ENCODE measurements at regions of chr6 and their contacts with region 1.

Region 1: DNA sequence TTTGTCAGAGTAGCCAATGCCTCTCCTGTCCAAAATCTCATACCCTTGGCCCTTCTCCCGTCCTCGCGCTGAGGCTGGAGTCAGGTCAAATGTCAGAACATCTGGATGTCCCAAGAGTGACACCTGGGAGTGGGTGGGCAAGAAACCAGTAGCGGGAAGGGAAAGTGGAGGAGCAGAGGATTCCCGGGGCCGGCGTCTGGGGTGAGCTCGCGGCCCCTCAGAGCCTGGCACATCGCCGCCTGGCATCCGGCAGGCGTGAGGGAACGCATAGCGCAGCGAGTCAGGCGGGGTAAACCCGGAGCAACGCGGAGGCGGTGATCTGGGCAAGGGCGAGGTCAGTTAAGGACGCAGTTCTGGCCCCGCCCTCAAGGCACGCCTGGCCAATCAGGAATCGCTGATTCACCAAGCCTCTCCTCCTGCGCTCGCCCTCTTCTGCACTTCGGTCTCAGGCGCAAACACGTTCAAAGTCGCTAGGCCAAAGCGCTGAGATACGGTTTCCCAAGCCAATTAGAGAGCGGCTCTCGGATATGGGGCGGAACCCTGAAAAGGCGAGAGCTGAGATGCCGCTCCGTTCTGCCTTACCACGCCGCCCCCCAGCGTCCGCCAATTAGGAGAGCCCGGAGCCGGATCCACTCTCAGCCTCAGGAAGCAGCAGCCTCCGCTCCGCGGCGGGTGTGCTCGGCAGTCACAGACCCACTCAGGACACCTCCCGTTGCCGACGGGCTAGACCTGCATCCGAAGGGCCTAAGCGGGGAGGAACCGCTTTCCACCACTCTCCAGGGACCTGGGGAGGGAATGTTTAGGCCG is 22.5 kb downstream of the VPS52 start:
- DNase-seq: peak; percentile 99
- H3K4me3 Mint-ChIP-seq: peak overlapping the region; percentile 82
- H3K27ac Mint-ChIP-seq: peak overlapping the region; percentile 70
- H3K4me1 Mint-ChIP-seq: peaks cover 22% of the 10 kb centered on the region
- H3K27me3 Mint-ChIP-seq: no peaks in the 10 kb centered on the region
- CTCF ChIP-seq: no peak

Region 2: DNA sequence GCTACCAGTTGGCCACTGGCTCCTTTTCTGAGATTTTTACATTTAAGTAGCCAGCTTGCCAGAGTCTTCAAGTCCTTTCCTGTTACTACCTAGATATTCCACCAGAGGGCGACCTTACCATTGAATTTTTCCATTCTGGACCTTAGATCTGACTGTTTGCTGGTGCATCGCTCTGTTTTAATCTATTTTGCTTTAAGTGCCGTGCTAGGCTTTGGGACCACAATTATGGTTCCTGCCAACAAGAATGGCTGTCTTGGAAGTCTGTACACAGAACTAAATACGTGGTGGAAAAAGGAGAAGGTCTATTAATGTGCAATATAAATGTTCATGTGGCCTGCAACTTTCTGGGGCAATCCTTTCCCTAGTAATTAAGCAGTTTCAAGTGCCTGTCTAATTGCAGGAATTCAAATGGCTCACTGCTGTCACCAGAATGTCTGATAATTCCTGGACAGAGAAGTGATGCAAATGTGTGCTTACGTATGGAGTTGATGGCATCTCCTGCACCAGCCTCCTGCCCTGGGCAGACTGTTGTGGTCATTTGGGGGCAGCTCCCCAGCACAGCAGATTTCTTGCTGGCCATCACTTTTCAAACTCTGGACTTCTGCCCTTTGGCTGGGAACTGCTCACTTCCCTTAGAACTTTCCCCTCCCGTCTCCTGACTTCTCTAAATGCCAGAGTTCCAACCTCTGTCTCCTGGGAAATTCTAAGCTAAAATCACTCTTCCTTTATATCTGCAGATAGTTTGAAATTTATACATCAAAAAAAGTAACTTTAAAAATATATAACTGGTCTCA is 234.1 kb before region 1 on chr6:
- CTCF ChIA-PET with region 1: interaction called, 31 read pairs
- POLR2A ChIA-PET with region 1: interaction called, 7 read pairs
- intact Hi-C with region 1: loop called (anchors 1 kb)
- DNase-seq: peak; percentile 72
- H3K4me3 Mint-ChIP-seq: no peak overlapping the region
- H3K27ac Mint-ChIP-seq: no peak overlapping the region
- H3K4me1 Mint-ChIP-seq: no peaks in the 10 kb centered on the region
- H3K27me3 Mint-ChIP-seq: peaks cover 98% of the 10 kb centered on the region
- CTCF ChIP-seq: peak; percentile 62

Region 3: DNA sequence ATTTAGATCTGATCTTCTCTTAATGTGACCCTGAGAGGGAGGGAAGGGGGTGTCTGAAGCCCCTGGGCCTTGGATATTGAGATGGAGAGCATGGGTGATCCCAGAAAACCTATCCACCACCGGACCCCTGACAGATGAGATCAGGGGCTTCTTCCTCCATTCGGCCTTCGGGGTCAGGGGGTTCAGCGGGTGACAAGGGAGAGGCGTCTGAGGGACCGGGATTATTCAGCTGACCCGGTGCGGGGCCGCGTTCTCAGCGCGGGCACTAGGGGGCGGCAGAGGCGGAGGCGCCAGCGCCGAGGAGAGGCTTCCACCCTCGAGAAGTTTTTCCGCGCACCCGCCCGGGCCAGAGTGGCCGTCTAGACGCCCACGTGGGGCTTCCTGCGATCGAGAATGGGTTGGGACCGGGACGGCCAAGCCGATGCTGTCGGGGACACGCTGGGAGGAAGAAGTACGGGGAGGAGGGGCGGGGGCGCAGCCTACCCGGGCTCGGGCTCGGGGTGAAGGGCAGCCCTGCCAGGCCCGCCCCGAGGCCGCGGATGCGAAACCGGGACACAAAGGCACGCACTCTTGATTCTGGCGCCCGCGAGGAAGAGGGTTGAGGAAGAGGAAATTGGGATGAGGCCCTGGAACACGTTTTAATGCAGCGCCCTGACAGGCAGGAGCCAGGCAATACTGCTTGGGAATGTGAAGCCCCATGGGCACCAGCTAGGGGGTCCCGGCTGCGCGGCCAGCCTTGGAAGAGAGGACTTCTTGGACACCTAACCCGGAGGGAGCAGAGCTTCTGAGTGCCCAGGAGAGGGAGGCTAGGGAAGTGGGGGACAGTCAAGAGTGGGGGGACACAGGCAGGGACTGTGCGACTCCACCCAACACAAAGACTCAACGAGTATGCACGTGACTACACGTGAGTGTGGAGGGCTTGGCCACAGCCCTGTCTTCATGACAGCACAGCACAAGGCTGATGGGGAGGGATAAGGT is 87.5 kb before region 1 on chr6:
- CTCF ChIA-PET with region 1: interaction called, 17 read pairs
- POLR2A ChIA-PET with region 1: interaction called, 4 read pairs
- intact Hi-C with region 1: loop called (anchors 1 kb)
- DNase-seq: peak; percentile 62
- H3K4me3 Mint-ChIP-seq: peak overlapping the region; percentile 85
- H3K27ac Mint-ChIP-seq: peak overlapping the region; percentile 88
- H3K4me1 Mint-ChIP-seq: peaks cover 12% of the 10 kb centered on the region
- H3K27me3 Mint-ChIP-seq: peaks cover 12% of the 10 kb centered on the region
- CTCF ChIP-seq: peak; percentile 93

Region 4: DNA sequence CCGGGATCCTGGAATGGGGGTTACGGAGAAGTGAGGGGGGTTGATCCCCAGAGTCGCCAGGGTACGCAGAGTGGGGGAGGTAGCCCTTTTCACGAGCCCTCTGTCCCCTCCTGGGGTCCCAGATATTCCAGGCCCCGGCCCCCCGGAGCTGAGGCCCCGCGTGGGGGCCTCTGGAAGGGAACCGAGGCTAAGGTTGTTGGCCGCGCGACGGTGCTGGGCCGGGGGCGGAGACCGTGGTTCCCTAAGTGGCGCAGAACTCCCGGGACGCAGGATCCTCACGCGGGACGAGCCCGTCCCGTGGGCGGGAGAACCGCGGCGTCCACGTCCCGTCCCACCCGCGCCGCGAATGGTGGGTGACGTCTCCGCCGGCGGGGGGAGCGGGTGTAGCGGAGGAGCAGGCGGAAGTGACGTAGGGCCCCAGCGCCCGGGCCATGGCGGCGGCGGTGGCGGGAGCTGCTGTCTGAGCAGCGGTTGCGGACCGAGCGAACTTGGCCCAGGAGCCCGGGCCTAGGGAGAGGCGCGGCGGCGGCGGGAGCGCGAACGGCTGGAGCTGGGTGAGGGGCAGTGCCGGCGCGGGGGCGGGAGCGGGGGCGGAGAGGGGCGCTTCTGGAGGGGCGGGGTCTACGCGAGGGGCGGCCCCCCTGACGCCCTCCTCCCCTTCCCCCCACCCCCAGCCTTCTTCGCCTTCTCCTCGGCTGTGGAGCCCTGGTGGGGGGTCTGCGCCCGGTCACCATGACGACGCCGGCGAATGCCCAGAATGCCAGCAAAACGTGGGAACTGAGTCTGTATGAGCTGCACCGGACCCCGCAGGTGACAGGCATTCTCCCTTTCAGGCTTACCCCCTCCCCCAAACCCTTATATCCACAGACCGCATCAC is 40.8 kb before region 1 on chr6 and contains the start of gene RING1:
- CTCF ChIA-PET with region 1: interaction called, 8 read pairs
- POLR2A ChIA-PET with region 1: interaction called, 73 read pairs
- intact Hi-C with region 1: loop called (anchors 2 kb)
- DNase-seq: peak; percentile 52
- H3K4me3 Mint-ChIP-seq: peak within 1 kb of the TSS; percentile 87
- H3K27ac Mint-ChIP-seq: peak within 1 kb of the TSS; percentile 94
- H3K4me1 Mint-ChIP-seq: peaks cover 50% of the 10 kb centered on the region
- H3K27me3 Mint-ChIP-seq: peaks cover 12% of the 10 kb centered on the region
- CTCF ChIP-seq: no peak
- total RNA-seq, gene RING1: 45.4 and 48.3 TPM in 2 replicates

Region 5: GRCh38 chr6:33264015-33264414 is 14.9 kb after region 1 on chr6:
- CTCF ChIA-PET with region 1: interaction called, 8 read pairs
- POLR2A ChIA-PET with region 1: interaction called, 155 read pairs
- intact Hi-C with region 1: no loop called
- DNase-seq: no peak
- H3K4me3 Mint-ChIP-seq: no peak overlapping the region
- H3K27ac Mint-ChIP-seq: no peak overlapping the region
- H3K4me1 Mint-ChIP-seq: peaks cover 6% of the 10 kb centered on the region
- H3K27me3 Mint-ChIP-seq: no peaks in the 10 kb centered on the region
- CTCF ChIP-seq: no peak

Region 6: GRCh38 chr6:33276864-33277662 is 27.9 kb after region 1 on chr6 and contains the start of gene B3GALT4:
- CTCF ChIA-PET with region 1: interaction called, 10 read pairs
- POLR2A ChIA-PET with region 1: interaction called, 155 read pairs
- intact Hi-C with region 1: no loop called
- DNase-seq: peak; percentile 72
- H3K4me3 Mint-ChIP-seq: peak within 1 kb of the TSS; percentile 99
- H3K27ac Mint-ChIP-seq: peak within 1 kb of the TSS; percentile 80
- H3K4me1 Mint-ChIP-seq: peaks cover 30% of the 10 kb centered on the region
- H3K27me3 Mint-ChIP-seq: no peaks in the 10 kb centered on the region
- CTCF ChIP-seq: peak; percentile 52
- total RNA-seq, gene B3GALT4: 0.37 and 0.58 TPM in 2 replicates

Region 7: DNA sequence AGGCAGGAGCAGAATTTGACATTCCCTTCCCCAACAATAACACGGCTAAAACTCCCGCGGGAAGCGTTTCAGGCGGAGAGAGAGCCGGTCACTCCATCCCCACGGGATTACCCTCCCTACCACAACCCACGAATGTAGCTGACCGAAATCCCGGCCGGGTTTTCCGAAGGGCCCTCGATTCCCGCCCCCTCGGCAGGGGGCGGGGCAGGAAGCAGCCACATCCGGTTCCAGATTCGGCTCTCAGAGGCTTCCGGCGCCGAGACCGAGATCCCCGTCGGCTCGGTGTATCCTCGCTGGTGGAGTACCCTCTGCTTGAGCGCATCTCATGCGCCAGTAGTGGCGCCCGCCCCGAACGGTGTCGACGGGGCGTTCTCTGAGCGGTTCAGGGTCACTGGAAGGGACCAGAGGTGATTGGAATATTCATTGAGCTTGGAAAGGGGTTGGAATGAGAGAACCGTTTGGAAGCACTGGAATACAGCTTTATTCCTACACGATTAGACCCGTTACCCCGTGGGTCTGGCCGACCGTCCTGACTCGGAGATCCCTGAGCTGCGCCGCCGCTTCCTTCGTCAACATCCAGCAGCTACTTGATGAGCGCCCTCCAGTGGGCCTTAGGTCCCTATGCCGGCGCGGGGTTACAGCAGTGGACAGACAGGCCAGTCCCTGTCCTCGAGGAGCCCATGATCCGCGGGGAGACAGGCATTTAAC is 50.3 kb after region 1 on chr6:
- CTCF ChIA-PET with region 1: no interaction called
- POLR2A ChIA-PET with region 1: interaction called, 14 read pairs
- intact Hi-C with region 1: no loop called
- DNase-seq: peak; percentile 93
- H3K4me3 Mint-ChIP-seq: peak overlapping the region; percentile 96
- H3K27ac Mint-ChIP-seq: peak overlapping the region; percentile 100
- H3K4me1 Mint-ChIP-seq: peaks cover 28% of the 10 kb centered on the region
- H3K27me3 Mint-ChIP-seq: no peaks in the 10 kb centered on the region
- CTCF ChIP-seq: peak; percentile 64

Region 8: DNA sequence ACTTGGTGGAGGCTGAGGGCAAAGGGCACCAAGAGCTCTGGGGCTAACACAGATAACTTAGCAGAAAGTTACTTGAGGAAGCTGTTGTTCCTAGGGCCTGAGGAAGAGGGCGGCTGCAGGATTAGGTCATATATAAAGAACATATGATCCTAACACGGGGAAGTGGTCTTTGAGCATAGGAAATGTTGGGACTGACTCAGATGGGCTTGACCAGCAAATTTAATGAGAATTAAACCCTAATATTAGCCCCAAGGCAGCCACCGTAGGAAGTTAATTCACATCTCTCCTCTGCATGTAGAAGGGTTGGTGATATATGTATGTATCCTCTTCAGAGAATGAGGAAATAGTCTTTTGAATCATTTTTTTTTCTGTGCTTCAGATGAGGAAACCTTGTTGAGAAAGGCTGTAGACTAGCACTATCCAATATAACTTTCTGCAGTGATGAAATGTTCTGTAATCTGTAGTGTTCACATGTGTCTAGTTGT is 196.0 kb after region 1 on chr6:
- CTCF ChIA-PET with region 1: no interaction called
- POLR2A ChIA-PET with region 1: no interaction called
- intact Hi-C with region 1: no loop called
- DNase-seq: no peak
- H3K4me3 Mint-ChIP-seq: no peak overlapping the region
- H3K27ac Mint-ChIP-seq: no peak overlapping the region
- H3K4me1 Mint-ChIP-seq: peaks cover under 1% of the 10 kb centered on the region
- H3K27me3 Mint-ChIP-seq: no peaks in the 10 kb centered on the region
- CTCF ChIP-seq: no peak

Measured in MCF 10A (cell line).